Activated CD4-positive, alpha-beta memory T cell treated with anti-CD3 and anti-CD28 coated beads, Interleukin-2, amount 10 ng/mL, durations not matched to agents 7 days and 5 days (primary cell): ENCODE measurements at regions of chr13 and their contacts with region 1.

Region 1: GRCh38 chr13:28324181-28324789 is 170.6 kb downstream of the FLT1 start:
- DNase-seq: peak; percentile 54
- H3K4me3 Mint-ChIP-seq: no peak overlapping the region
- H3K27ac Mint-ChIP-seq: no peak overlapping the region
- H3K4me1 Mint-ChIP-seq: no peaks in the 10 kb centered on the region
- H3K27me3 Mint-ChIP-seq: peaks cover 3% of the 10 kb centered on the region

Region 2: GRCh38 chr13:28161370-28161769 is 162.9 kb before region 1 on chr13:
- CTCF ChIA-PET with region 1: no interaction called
- POLR2A ChIA-PET with region 1: no interaction called
- DNase-seq: no peak
- H3K4me3 Mint-ChIP-seq: no peak overlapping the region
- H3K27ac Mint-ChIP-seq: no peak overlapping the region
- H3K4me1 Mint-ChIP-seq: no peaks in the 10 kb centered on the region
- H3K27me3 Mint-ChIP-seq: no peaks in the 10 kb centered on the region

Region 3: GRCh38 chr13:28313579-28313978 is 10.7 kb before region 1 on chr13:
- CTCF ChIA-PET with region 1: interaction called, 15 read pairs
- POLR2A ChIA-PET with region 1: no interaction called
- DNase-seq: no peak
- H3K4me3 Mint-ChIP-seq: no peak overlapping the region
- H3K27ac Mint-ChIP-seq: no peak overlapping the region
- H3K4me1 Mint-ChIP-seq: no peaks in the 10 kb centered on the region
- H3K27me3 Mint-ChIP-seq: no peaks in the 10 kb centered on the region

Region 4: GRCh38 chr13:28636674-28637317 is 312.5 kb after region 1 on chr13:
- CTCF ChIA-PET with region 1: interaction called, 10 read pairs
- POLR2A ChIA-PET with region 1: interaction called, 3 read pairs
- DNase-seq: peak; percentile 53
- H3K4me3 Mint-ChIP-seq: no peak overlapping the region
- H3K27ac Mint-ChIP-seq: no peak overlapping the region
- H3K4me1 Mint-ChIP-seq: peaks cover 7% of the 10 kb centered on the region
- H3K27me3 Mint-ChIP-seq: peaks cover 17% of the 10 kb centered on the region

Region 5: DNA sequence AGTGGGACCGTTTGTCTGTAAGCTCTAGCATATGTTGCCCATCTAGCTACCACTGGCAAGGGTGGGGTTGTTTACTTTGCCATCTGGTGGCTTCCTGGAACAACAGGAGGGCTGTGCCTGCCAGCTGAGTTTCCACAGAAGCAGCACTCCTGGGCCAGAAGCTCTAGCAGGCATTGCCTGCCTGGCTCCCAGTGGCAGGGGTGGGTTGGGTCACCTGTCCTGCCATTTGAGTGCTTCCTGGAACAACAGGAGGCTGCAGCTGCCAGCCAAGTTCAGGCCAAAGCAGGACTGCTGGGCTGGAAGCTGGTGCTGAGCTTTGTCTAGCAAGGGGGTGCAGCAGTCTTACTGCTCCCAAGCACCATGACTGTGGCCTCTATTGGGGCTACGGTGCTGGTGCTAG is 735.5 kb after region 1 on chr13:
- CTCF ChIA-PET with region 1: no interaction called
- POLR2A ChIA-PET with region 1: no interaction called
- DNase-seq: no peak
- H3K4me3 Mint-ChIP-seq: no peak overlapping the region
- H3K27ac Mint-ChIP-seq: no peak overlapping the region
- H3K4me1 Mint-ChIP-seq: peaks cover under 1% of the 10 kb centered on the region
- H3K27me3 Mint-ChIP-seq: no peaks in the 10 kb centered on the region